Activated naive CD4-positive, alpha-beta T cell treated with anti-CD3 and anti-CD28 coated beads for 36 hours (primary cell): ENCODE measurements at regions of chr5 and their contacts with region 1.

Region 1: GRCh38 chr5:178279725-178280438 is 47.3 kb upstream of the PHYKPL start:
- DNase-seq: peak; percentile 77
- H3K4me3 Mint-ChIP-seq: no peak overlapping the region
- H3K27ac Mint-ChIP-seq: no peak overlapping the region
- H3K4me1 Mint-ChIP-seq: peaks cover 4% of the 10 kb centered on the region
- H3K27me3 Mint-ChIP-seq: peaks cover 3% of the 10 kb centered on the region

Region 2: GRCh38 chr5:178137991-178138390 is 141.9 kb before region 1 on chr5:
- CTCF ChIA-PET with region 1: no interaction called
- intact Hi-C with region 1: no loop called
- DNase-seq: no peak
- H3K4me3 Mint-ChIP-seq: no peak overlapping the region
- H3K27ac Mint-ChIP-seq: no peak overlapping the region
- H3K4me1 Mint-ChIP-seq: peaks cover 22% of the 10 kb centered on the region
- H3K27me3 Mint-ChIP-seq: no peaks in the 10 kb centered on the region

Region 3: GRCh38 chr5:178461004-178461730 is 181.3 kb after region 1 on chr5:
- CTCF ChIA-PET with region 1: interaction called, 12 read pairs
- intact Hi-C with region 1: no loop called
- DNase-seq: peak; percentile 73
- H3K4me3 Mint-ChIP-seq: no peak overlapping the region
- H3K27ac Mint-ChIP-seq: no peak overlapping the region
- H3K4me1 Mint-ChIP-seq: no peaks in the 10 kb centered on the region
- H3K27me3 Mint-ChIP-seq: no peaks in the 10 kb centered on the region

Region 4: GRCh38 chr5:178551059-178551458 is 271.2 kb after region 1 on chr5:
- CTCF ChIA-PET with region 1: interaction called, 6 read pairs
- intact Hi-C with region 1: loop called (anchors 1 kb)
- DNase-seq: no peak
- H3K4me3 Mint-ChIP-seq: no peak overlapping the region
- H3K27ac Mint-ChIP-seq: no peak overlapping the region
- H3K4me1 Mint-ChIP-seq: no peaks in the 10 kb centered on the region
- H3K27me3 Mint-ChIP-seq: no peaks in the 10 kb centered on the region

Region 5: DNA sequence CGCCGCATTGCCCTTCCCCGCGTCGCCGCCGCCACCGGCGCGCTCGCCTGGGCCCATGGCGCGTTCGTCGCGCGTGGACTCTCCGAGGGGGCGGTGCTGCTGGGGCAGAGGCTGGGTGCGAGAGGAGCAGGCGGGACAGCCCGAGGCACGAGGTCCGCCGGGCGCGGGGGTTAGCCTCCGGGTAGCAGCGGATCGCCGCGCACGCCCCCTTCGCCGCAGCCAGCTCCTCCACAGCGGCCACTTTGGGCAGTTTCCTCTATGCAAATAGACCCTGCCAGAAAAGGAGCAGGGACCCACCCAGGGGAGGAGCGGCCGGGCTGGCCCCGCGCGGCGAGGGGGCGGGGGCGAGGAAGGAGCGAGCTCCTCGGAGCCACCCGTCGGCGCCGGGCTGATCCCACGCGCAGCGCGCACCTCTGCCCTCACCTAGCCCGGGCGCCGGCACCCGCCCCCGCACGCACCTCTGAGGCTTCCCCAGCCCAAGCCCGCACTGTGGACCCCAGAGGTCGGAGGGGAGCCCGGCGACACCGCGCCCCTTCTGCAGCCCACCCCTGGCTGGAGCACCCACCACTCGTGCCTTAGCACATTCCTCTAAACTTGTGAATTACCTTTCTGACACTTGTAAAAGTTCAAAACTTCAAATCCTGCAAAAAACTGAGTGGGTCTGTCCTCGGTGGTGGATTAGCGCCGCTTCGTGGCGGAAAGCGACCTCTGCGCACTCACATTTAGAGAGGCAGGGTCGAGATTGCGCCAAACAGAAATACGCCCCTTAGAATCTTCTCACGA is 310.4 kb after region 1 on chr5 and contains the start of gene COL23A1:
- CTCF ChIA-PET with region 1: interaction called, 5 read pairs
- intact Hi-C with region 1: loop called (anchors 1 kb)
- DNase-seq: peak; percentile 63
- H3K4me3 Mint-ChIP-seq: peak within 1 kb of the TSS; percentile 57
- H3K27ac Mint-ChIP-seq: no peak within 1 kb of the TSS
- H3K4me1 Mint-ChIP-seq: peaks cover 7% of the 10 kb centered on the region
- H3K27me3 Mint-ChIP-seq: peaks cover 45% of the 10 kb centered on the region
- total RNA-seq, gene COL23A1: 0.07 TPM in 1 of 2 experiments, not detected in the other

Region 6: GRCh38 chr5:178838695-178839685 is 559.1 kb after region 1 on chr5:
- CTCF ChIA-PET with region 1: interaction called, 3 read pairs
- intact Hi-C with region 1: loop called (anchors 5 kb)
- DNase-seq: peak; percentile 74
- H3K4me3 Mint-ChIP-seq: no peak overlapping the region
- H3K27ac Mint-ChIP-seq: no peak overlapping the region
- H3K4me1 Mint-ChIP-seq: no peaks in the 10 kb centered on the region
- H3K27me3 Mint-ChIP-seq: no peaks in the 10 kb centered on the region

Region 7: DNA sequence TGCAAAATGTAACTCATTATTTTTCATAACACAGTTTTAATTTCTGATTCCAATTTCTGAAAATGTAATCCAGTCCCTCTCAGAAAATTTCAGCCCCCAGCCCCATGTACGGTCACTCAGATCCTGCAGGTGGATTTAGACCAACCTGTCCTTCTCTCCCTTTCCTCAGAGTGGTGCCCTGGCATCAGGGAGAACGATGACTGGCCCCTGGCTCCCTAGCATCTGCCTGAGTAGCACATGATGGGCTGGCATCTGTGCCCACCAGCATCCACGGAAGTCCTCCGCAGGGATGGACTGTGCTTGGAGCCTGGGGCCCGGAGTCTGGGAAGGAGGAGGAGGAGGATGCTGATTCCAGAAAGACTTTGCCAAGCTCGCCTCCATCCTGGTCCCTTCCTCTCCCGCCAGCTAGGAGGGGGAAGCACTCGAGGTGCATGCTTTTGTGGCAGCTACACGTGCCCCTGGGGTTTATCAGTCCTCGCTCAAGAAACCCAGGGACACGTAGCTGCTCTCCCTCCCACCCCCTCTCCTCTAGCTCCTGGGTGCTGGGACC is 1216.1 kb after region 1 on chr5:
- CTCF ChIA-PET with region 1: interaction called, 3 read pairs
- intact Hi-C with region 1: loop called (anchors 2 kb)
- DNase-seq: peak; percentile 20
- H3K4me3 Mint-ChIP-seq: no peak overlapping the region
- H3K27ac Mint-ChIP-seq: no peak overlapping the region
- H3K4me1 Mint-ChIP-seq: no peaks in the 10 kb centered on the region
- H3K27me3 Mint-ChIP-seq: no peaks in the 10 kb centered on the region